ENCODE measurements at regions of chr6 and their contacts with region 1.

Region 1: GRCh38 chr6:148342357-148343046 is at the start of gene SASH1:
- DNase-seq: peak; percentile 89
- H3K4me3 ChIP-seq: peak within 1 kb of the TSS; percentile 69 to 97 (median 96)
- H3K27ac ChIP-seq: peak within 1 kb of the TSS; percentile 94
- H3K4me1 ChIP-seq: peaks cover 53% of the 10 kb centered on the region
- H3K27me3 ChIP-seq: no peaks in the 10 kb centered on the region
- CTCF ChIP-seq: no peak
- POLR2A ChIP-seq: no peak
- total RNA-seq, gene SASH1: 97.5 and 103 TPM in 2 replicates

Region 2: DNA sequence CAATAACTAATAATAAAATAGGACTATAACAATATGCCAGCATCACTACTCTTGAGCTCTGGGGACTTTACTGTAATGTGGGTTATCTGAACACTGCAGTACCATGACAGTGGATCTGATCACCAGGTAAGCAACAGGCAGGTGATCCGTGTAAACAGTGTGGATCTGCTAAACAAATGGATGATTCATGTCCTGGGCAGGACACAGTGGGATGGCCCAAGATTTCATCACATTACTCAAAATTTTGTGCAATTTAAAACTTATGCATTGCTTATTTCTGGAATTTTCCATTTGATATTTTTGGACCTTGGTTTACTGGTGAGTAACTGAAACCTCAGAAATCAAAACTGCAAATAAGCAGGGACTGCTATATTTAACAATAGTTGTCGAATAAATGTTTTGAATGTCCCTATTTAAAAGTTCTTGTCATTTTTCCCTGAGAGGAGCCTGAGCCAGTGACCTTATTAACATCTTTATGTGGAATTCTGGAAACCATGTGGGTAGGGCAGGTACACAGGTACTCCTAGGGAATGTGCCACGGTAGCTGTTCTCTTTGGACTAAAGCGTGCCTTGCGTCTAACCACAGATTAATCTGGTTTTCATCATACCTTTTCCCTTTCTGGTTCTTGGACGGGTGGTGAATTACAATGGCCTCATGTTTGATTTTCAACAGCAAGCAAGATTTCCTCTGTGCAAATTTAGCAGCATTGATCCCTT is 214.3 kb before region 1 on chr6:
- CTCF ChIA-PET with region 1: no interaction called
- POLR2A ChIA-PET with region 1: no interaction called
- dilution Hi-C with region 1: no loop called
- intact Hi-C with region 1: no loop called
- DNase-seq: no peak
- H3K4me3 ChIP-seq: no peak overlapping the region
- H3K27ac ChIP-seq: no peak overlapping the region
- H3K4me1 ChIP-seq: peaks cover 5% of the 10 kb centered on the region
- H3K27me3 ChIP-seq: no peaks in the 10 kb centered on the region
- CTCF ChIP-seq: no peak
- POLR2A ChIP-seq: no peak

Region 3: DNA sequence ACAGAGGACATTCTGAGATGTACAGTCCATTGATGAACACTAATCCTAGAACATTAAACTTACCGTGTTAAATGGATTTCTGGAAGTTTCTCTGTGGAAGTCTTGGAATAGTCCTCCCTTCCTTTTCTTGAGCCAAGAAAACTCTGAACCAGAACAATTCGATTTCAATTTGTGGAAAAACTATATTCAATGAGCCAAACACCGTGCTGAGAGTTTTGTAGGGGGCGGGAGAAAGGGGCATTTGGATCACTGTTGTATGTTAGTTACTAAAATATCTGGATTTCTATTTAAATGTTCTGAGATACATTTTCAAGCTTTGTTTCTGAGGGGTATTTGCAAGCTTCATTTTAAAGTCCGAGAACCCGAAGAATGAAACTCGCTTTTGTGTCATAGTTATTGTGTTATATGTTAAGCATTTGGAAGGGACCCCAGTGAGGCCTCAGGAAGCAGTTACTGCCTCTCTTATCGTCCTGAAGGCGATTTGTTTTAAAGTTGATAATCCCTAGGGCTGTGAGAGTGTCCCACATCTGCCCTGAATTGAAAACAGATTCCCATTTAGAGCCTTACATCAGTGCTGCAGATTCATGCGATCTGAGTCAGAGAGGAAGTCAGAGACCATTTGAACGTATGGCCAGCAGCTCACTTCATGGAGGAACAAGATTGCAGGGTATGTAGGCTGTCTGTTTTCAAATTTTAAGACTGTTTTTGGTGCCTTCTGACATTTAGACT is 70.6 kb before region 1 on chr6:
- CTCF ChIA-PET with region 1: interaction called, 4 read pairs
- POLR2A ChIA-PET with region 1: no interaction called
- dilution Hi-C with region 1: no loop called
- intact Hi-C with region 1: loop called (anchors 1 kb)
- DNase-seq: peak; percentile 89
- H3K4me3 ChIP-seq: peak overlapping the region in 1 of 3 experiments; percentile 45
- H3K27ac ChIP-seq: peak overlapping the region; percentile 93
- H3K4me1 ChIP-seq: peaks cover 47% of the 10 kb centered on the region
- H3K27me3 ChIP-seq: no peaks in the 10 kb centered on the region
- CTCF ChIP-seq: no peak
- POLR2A ChIP-seq: peak; percentile 33

Region 4: GRCh38 chr6:148317739-148318138 is 24.8 kb before region 1 on chr6:
- CTCF ChIA-PET with region 1: no interaction called
- POLR2A ChIA-PET with region 1: no interaction called
- dilution Hi-C with region 1: no loop called
- intact Hi-C with region 1: loop called (anchors 1 kb)
- DNase-seq: no peak
- H3K4me3 ChIP-seq: no peak overlapping the region
- H3K27ac ChIP-seq: peak overlapping the region; percentile 80
- H3K4me1 ChIP-seq: peaks cover 12% of the 10 kb centered on the region
- H3K27me3 ChIP-seq: no peaks in the 10 kb centered on the region
- CTCF ChIP-seq: no peak
- POLR2A ChIP-seq: no peak

Region 5: DNA sequence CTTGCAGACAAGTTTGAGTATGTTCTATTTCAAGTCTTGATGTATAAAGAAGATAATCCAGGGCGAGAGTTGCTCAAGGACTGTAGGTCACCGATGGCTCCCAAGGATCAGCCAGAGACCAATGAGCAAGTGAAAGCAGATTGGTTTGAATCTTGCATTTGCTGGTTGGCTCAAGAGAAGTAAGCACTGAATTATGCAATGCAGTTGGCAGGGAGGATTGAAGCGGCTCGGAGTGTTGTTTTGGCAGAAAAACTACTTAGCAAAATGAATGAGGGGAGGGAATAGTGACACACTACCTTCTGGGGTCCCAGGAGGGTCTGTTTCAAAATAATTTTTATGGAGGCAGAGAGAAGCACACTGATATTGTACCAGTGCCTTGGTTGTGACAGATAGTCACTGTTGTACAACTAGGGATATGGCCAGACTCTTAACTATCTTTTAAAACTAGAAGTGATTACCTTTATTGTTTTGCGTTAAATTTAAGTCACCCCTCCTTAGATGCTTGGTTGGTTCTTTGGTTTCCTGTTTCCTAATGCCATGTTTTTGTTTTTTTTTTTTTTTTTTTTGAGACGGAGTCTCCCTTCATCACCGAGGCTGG is 15.8 kb after region 1 on chr6:
- CTCF ChIA-PET with region 1: interaction called, 3 read pairs
- POLR2A ChIA-PET with region 1: no interaction called
- dilution Hi-C with region 1: no loop called
- intact Hi-C with region 1: loop called (anchors 1 kb)
- DNase-seq: no peak
- H3K4me3 ChIP-seq: no peak overlapping the region
- H3K27ac ChIP-seq: no peak overlapping the region
- H3K4me1 ChIP-seq: peaks cover 6% of the 10 kb centered on the region
- H3K27me3 ChIP-seq: no peaks in the 10 kb centered on the region
- CTCF ChIP-seq: no peak
- POLR2A ChIP-seq: no peak

Region 6: GRCh38 chr6:148440877-148441453 is 98.5 kb after region 1 on chr6:
- CTCF ChIA-PET with region 1: interaction called, 3 read pairs
- POLR2A ChIA-PET with region 1: interaction called, 4 read pairs
- dilution Hi-C with region 1: no loop called
- intact Hi-C with region 1: loop called (anchors 1 kb)
- DNase-seq: peak; percentile 86
- H3K4me3 ChIP-seq: no peak overlapping the region
- H3K27ac ChIP-seq: peak overlapping the region; percentile 98
- H3K4me1 ChIP-seq: peaks cover 62% of the 10 kb centered on the region
- H3K27me3 ChIP-seq: no peaks in the 10 kb centered on the region
- CTCF ChIP-seq: no peak
- POLR2A ChIP-seq: no peak

Region 7: DNA sequence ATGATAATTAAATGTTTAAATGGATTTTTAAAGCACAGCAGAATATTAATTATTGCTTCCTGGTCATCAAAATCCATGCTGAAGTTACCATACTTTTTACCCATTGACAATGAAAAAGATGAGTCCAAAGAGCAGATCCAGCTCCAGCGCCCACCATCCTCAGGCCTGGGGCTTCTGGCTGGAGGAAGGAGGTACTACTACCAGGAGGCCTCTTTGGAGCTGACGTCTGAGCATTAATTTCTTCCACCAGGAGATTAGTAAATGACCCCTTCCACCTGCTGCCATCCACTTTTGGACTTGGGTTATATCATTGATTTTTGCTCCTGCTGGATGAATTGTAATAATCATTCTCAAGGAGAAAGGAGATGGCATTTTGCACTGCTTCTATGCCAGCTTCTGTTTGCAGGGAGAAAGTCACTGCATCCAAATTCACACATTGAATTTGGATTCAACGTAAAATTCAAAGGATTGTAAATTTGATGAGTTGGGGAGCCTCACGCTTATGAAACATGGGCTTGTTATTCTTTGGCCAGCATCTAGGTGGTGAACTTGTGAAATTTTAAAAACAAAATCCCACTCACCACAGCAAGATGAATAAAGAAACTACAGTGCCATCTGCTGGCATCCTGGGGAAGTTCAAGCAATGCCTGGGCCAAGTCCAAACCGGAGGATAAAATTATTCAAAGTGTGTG is 122.0 kb after region 1 on chr6:
- CTCF ChIA-PET with region 1: interaction called, 10 read pairs
- POLR2A ChIA-PET with region 1: no interaction called
- dilution Hi-C with region 1: no loop called
- intact Hi-C with region 1: loop called (anchors 1 kb)
- DNase-seq: peak; percentile 86
- H3K4me3 ChIP-seq: no peak overlapping the region
- H3K27ac ChIP-seq: peak overlapping the region; percentile 42
- H3K4me1 ChIP-seq: peaks cover 37% of the 10 kb centered on the region
- H3K27me3 ChIP-seq: no peaks in the 10 kb centered on the region
- CTCF ChIP-seq: peak; percentile 76 to 94
- POLR2A ChIP-seq: no peak

Region 8: GRCh38 chr6:148898376-148899014 is 556.0 kb after region 1 on chr6:
- CTCF ChIA-PET with region 1: no interaction called
- POLR2A ChIA-PET with region 1: no interaction called
- dilution Hi-C with region 1: no loop called
- intact Hi-C with region 1: no loop called
- DNase-seq: no peak
- H3K4me3 ChIP-seq: no peak overlapping the region
- H3K27ac ChIP-seq: no peak overlapping the region
- H3K4me1 ChIP-seq: no peaks in the 10 kb centered on the region
- H3K27me3 ChIP-seq: no peaks in the 10 kb centered on the region
- CTCF ChIP-seq: no peak
- POLR2A ChIP-seq: no peak